ENCODE measurements at regions of chr15 and their contacts with region 1.

Region 1: GRCh38 chr15:43903864-43904290 is 77.1 kb downstream of the WDR76 start:
- DNase-seq: no peak
- H3K4me3 ChIP-seq: no peak overlapping the region
- H3K27ac ChIP-seq: no peak overlapping the region
- H3K4me1 ChIP-seq: peaks cover 0 to 5% (median 0%) of the 10 kb centered on the region in 4 donors
- H3K27me3 ChIP-seq: no peaks in the 10 kb centered on the region
- CTCF ChIP-seq: peak; percentile 67 to 80 (median 75)
- EP300 ChIP-seq: no peak
- POLR2A ChIP-seq: no peak

Region 2: GRCh38 chr15:43762824-43763223 is 141.1 kb before region 1 on chr15:
- intact Hi-C with region 1: no loop called
- DNase-seq: no peak
- H3K4me3 ChIP-seq: no peak overlapping the region
- H3K27ac ChIP-seq: peak overlapping the region; percentile 14 to 61 (median 48)
- H3K4me1 ChIP-seq: peaks cover 6 to 25% (median 22%) of the 10 kb centered on the region in 4 donors
- H3K27me3 ChIP-seq: no peaks in the 10 kb centered on the region
- CTCF ChIP-seq: no peak
- EP300 ChIP-seq: no peak
- POLR2A ChIP-seq: no peak

Region 3: GRCh38 chr15:44066316-44066740 is 162.5 kb after region 1 on chr15:
- intact Hi-C with region 1: loop called (anchors 5 kb)
- DNase-seq: no peak
- H3K4me3 ChIP-seq: no peak overlapping the region
- H3K27ac ChIP-seq: no peak overlapping the region
- H3K4me1 ChIP-seq: no peaks in the 10 kb centered on the region
- H3K27me3 ChIP-seq: no peaks in the 10 kb centered on the region
- CTCF ChIP-seq: peak; percentile 58 to 71 (median 62)
- EP300 ChIP-seq: no peak
- POLR2A ChIP-seq: no peak

Region 4: DNA sequence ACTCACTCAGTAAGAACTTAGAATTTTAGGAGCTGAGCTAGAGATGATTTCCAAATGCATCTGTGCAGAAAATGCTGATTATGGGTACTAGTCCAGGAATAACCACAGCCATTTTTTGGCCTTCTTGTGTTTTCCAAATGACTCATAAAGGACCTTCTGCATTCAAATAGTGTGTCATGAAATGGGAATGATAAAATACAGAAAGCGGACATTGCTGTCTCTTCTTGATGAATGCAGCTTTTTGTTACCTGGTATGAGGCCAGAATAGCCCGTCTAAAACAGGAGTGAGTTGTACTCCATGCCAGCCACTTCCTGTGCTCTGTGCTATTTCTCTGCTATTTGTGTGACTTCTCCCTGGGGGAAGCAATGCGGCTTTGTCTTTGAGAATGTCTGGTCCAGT is 311.7 kb after region 1 on chr15:
- intact Hi-C with region 1: loop called (anchors 10 kb)
- DNase-seq: no peak
- H3K4me3 ChIP-seq: no peak overlapping the region
- H3K27ac ChIP-seq: no peak overlapping the region
- H3K4me1 ChIP-seq: no peaks in the 10 kb centered on the region
- H3K27me3 ChIP-seq: peaks cover 0 to 20% (median 0%) of the 10 kb centered on the region in 4 donors
- CTCF ChIP-seq: no peak
- EP300 ChIP-seq: no peak
- POLR2A ChIP-seq: no peak

Measured in esophagus muscularis mucosa (tissue), 4 donors.